ENCODE measurements at regions of chr16 and their contacts with region 1.

Region 1: DNA sequence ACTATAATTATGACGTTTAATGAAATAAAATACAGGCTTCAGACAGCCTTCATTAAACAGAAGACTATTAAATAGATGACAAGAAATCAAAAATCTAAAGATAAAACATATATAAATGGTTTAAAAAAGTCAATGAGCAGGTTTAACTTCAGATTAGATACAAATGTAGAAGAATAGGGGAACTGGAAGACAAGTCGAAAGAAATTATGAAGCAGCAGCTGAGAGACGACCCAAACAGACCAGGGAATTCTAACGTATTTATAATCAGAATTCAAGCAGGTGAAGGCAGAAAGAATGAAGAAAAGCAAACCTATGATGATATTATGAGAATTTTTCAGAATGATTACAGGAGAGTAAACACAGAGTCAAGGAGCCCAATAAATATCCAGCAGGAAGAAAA is 235.1 kb upstream of the XYLT1 start:
- DNase-seq: no peak
- H3K4me3 ChIP-seq: no peak overlapping the region
- H3K27ac ChIP-seq: no peak overlapping the region
- H3K4me1 ChIP-seq: no peaks in the 10 kb centered on the region
- H3K27me3 ChIP-seq: no peaks in the 10 kb centered on the region
- CTCF ChIP-seq: no peak
- EP300 ChIP-seq: no peak
- POLR2A ChIP-seq: no peak

Region 2: GRCh38 chr16:17590719-17591654 is 114.9 kb before region 1 on chr16:
- intact Hi-C with region 1: no loop called
- DNase-seq: no peak
- H3K4me3 ChIP-seq: no peak overlapping the region
- H3K27ac ChIP-seq: no peak overlapping the region
- H3K4me1 ChIP-seq: no peaks in the 10 kb centered on the region
- H3K27me3 ChIP-seq: no peaks in the 10 kb centered on the region
- CTCF ChIP-seq: no peak
- EP300 ChIP-seq: no peak
- POLR2A ChIP-seq: no peak

Region 3: DNA sequence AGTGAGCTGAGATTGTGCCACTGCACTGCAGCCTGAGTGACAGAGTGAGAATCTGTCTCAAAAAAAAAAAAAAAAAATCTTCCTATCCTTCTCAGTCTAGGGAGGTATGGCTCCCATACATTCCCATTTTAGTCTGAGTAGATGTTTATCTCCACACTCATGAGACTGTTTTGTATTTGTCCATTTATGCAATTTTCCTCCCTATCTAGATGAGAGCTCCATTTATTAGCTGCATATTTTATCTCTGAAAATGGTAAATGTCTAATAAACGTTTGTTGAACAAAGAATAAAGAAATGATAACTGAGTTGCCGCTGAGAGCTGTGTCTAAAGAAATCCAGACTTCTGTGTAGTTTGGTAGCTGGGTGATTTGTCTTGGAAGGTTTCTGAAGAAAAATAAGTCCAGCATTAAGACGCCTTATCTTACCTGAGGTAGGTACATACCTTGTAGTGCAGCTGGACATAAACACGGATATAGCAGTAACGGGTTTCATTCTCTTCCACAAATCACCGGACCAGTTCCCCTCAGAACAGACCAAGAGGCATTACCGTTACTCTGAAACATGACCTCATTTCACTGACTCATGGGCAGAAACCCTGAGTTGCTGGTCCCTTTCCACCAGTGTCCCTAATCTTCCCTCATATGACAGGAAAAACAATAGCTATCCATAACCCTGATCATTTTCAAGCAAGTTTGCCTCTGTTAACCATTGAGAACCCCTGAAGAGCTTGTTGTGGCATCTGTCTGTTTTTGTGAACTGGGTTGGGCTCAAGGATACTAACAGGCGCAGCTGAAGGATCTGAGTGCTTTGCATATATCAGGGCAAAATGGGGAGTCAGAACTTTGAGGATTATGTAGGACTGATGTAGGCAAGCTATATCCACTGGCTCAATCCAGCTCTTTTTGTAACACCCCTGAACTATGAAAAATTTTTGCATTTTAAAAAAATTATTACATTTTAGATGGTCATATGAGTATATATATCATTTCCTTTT is 57.7 kb before region 1 on chr16:
- intact Hi-C with region 1: loop called (anchors 10 kb)
- DNase-seq: no peak
- H3K4me3 ChIP-seq: no peak overlapping the region
- H3K27ac ChIP-seq: no peak overlapping the region
- H3K4me1 ChIP-seq: no peaks in the 10 kb centered on the region
- H3K27me3 ChIP-seq: no peaks in the 10 kb centered on the region
- CTCF ChIP-seq: no peak
- EP300 ChIP-seq: no peak
- POLR2A ChIP-seq: no peak

Region 4: DNA sequence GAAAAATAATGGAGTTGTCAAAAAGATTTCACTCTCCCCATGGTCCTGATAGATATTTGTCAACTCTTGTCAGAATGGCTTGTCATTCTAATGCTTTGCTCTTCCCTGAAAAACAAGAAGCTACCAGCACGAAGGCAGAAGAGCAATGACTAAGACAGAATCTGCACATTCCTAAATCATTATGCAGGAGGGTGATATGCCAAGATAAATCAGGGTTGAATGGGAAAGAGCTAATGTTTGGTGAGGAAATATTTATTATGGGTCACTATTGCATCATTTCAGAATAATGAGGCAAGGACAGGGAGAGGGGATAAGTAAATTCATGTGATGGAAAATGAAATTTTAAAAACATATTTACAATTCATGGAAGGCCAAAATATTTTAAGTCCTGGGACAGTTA is 62.4 kb after region 1 on chr16:
- intact Hi-C with region 1: loop called (anchors 10 kb)
- DNase-seq: no peak
- H3K4me3 ChIP-seq: no peak overlapping the region
- H3K27ac ChIP-seq: no peak overlapping the region
- H3K4me1 ChIP-seq: no peaks in the 10 kb centered on the region
- H3K27me3 ChIP-seq: no peaks in the 10 kb centered on the region
- CTCF ChIP-seq: no peak
- EP300 ChIP-seq: no peak
- POLR2A ChIP-seq: no peak

Measured in esophagus muscularis mucosa (tissue), 4 donors.